Activated naive CD4-positive, alpha-beta T cell treated with anti-CD3 and anti-CD28 coated beads, Interleukin-2, amount 10 ng/mL, durations not matched to agents 7 days and 5 days (primary cell): ENCODE measurements at regions of chr3 and their contacts with region 1.

Region 1: GRCh38 chr3:155805802-155806618 is at the start of gene C3orf33:
- DNase-seq: peak; percentile 76
- H3K4me3 Mint-ChIP-seq: peak within 1 kb of the TSS; percentile 80
- H3K27ac Mint-ChIP-seq: peak within 1 kb of the TSS; percentile 29
- H3K4me1 Mint-ChIP-seq: peaks cover 13% of the 10 kb centered on the region
- H3K27me3 Mint-ChIP-seq: peaks cover 12% of the 10 kb centered on the region

Region 2: GRCh38 chr3:155673421-155673820 is 132.6 kb before region 1 on chr3:
- CTCF ChIA-PET with region 1: no interaction called
- DNase-seq: no peak
- H3K4me3 Mint-ChIP-seq: no peak overlapping the region
- H3K27ac Mint-ChIP-seq: no peak overlapping the region
- H3K4me1 Mint-ChIP-seq: no peaks in the 10 kb centered on the region
- H3K27me3 Mint-ChIP-seq: peaks cover 4% of the 10 kb centered on the region

Region 3: GRCh38 chr3:155835341-155836071 is 29.5 kb after region 1 on chr3:
- CTCF ChIA-PET with region 1: interaction called, 11 read pairs
- DNase-seq: no peak
- H3K4me3 Mint-ChIP-seq: no peak overlapping the region
- H3K27ac Mint-ChIP-seq: no peak overlapping the region
- H3K4me1 Mint-ChIP-seq: no peaks in the 10 kb centered on the region
- H3K27me3 Mint-ChIP-seq: no peaks in the 10 kb centered on the region

Region 4: GRCh38 chr3:155854141-155854940 is 48.3 kb after region 1 on chr3 and contains the start of gene SLC33A1:
- CTCF ChIA-PET with region 1: interaction called, 20 read pairs
- DNase-seq: peak; percentile 99
- H3K4me3 Mint-ChIP-seq: peak within 1 kb of the TSS; percentile 86
- H3K27ac Mint-ChIP-seq: peak within 1 kb of the TSS; percentile 100
- H3K4me1 Mint-ChIP-seq: peaks cover 42% of the 10 kb centered on the region
- H3K27me3 Mint-ChIP-seq: peaks cover 21% of the 10 kb centered on the region

Region 5: DNA sequence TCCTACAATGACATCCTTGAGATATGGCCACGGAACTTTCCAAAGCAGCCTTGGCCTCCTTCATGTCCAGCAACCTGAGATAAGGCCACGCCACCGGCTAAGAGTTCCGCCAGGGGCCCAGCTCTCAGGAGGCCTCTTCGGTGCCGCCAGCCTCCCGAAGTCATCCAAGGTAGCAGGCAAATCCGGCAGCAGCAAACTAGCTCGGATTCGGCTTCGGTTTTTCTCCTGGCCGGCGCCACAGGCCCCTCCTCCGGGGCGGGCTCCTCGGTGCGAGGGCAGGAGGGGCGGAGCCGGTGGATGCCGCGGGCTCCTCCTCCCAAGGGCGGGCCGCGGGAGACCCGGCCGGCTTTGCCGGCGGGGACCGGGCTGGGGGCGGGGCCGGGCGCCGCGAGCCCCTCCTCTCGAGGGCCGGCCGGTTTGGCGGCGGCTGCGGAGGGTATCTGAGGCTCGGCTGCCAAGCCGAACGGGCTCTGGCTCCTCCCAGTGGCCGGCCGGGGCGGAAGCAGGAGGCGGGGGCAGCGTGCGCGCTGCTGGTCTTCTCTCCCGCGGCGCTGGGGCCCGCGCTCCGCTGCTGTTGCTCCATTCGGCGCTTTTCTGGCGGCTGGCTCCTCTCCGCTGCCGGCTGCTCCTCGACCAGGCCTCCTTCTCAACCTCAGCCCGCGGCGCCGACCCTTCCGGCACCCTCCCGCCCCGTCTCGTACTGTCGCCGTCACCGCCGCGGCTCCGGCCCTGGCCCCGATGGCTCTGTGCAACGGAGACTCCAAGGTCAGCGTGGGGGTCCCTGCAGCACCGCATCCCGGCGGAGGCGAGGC is 64.3 kb after region 1 on chr3 and contains the start of gene GMPS:
- CTCF ChIA-PET with region 1: interaction called, 39 read pairs
- DNase-seq: peak; percentile 96
- H3K4me3 Mint-ChIP-seq: peak within 1 kb of the TSS; percentile 96
- H3K27ac Mint-ChIP-seq: peak within 1 kb of the TSS; percentile 95
- H3K4me1 Mint-ChIP-seq: peaks cover 27% of the 10 kb centered on the region
- H3K27me3 Mint-ChIP-seq: no peaks in the 10 kb centered on the region

Region 6: GRCh38 chr3:156449712-156450574 is 643.9 kb after region 1 on chr3:
- CTCF ChIA-PET with region 1: no interaction called
- DNase-seq: no peak
- H3K4me3 Mint-ChIP-seq: no peak overlapping the region
- H3K27ac Mint-ChIP-seq: no peak overlapping the region
- H3K4me1 Mint-ChIP-seq: no peaks in the 10 kb centered on the region
- H3K27me3 Mint-ChIP-seq: peaks cover 22% of the 10 kb centered on the region